B cell (primary cell): ENCODE measurements at regions of chr15 and their contacts with region 1.

Region 1: DNA sequence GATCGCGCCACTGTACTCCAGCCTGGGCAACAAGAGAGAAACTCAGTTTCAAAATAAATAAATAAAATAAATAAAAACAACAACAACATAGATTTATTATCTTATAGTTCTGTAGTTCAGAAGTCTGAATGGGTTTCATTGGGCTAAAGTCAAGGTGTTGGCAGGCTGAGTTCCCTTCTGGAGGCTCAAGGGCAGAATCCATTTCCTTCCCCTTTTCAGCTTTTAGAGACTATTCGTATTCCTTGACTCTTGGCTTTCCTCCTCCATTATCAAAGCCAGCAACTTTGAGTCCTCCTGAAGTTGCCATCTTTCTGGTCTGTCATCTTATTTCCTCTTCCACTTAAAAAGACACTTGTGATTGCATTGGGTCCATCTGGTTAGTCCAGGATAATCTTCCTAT is 12.1 kb downstream of the BLM start:
- DNase-seq: no peak
- ATAC-seq: no peak
- H3K4me3 ChIP-seq: no peak overlapping the region
- H3K4me3 Mint-ChIP-seq: no peak overlapping the region
- H3K27ac ChIP-seq: no peak overlapping the region
- H3K27ac Mint-ChIP-seq: no peak overlapping the region
- H3K4me1 ChIP-seq: peaks cover 9 to 11% of the 10 kb centered on the region in 2 donors
- H3K4me1 Mint-ChIP-seq: peaks cover 16% of the 10 kb centered on the region
- H3K27me3 ChIP-seq: no peaks in the 10 kb centered on the region
- H3K27me3 Mint-ChIP-seq: no peaks in the 10 kb centered on the region
- CTCF ChIP-seq: no peak

Region 2: DNA sequence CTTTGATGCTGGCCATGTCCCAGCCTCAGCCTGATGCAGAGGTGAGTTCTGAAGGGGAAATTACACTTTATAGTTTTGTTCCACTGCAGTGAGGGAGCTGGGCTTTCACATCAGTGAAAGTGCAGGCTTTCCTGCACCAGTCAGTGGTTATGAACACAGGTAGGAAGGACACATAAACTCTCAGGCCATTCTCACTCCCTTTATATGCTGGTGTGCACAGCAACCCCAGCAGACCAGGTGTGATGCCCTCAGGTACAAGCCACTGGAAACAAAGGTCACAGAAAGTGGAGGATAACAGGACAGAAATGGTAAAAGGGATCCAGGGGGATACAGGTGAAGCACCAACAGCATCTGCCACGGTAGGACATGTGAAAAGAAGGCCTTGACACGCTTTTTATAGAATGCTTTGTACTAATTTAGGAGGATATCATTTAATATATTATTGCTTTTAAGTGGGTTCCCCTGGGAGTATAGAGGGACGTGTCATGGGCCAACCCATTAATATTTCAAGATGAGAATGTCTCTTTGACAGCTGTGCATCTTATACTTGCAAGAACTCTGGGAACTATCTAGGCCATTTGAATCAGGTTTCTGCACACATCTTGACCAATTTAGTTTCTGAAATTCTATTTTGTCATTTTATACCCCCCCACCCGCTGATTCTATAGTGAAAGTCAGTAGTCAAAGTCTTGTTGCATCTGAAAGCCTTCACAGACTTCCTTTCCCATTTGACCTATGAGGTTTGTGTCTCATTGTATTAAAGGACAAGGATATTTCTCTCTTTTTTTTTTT is 37.1 kb before region 1 on chr15:
- CTCF ChIA-PET with region 1: no interaction called
- POLR2A ChIA-PET with region 1: no interaction called
- intact Hi-C with region 1: loop called (anchors 5 kb)
- DNase-seq: no peak
- ATAC-seq: no peak
- H3K4me3 ChIP-seq: no peak overlapping the region
- H3K4me3 Mint-ChIP-seq: no peak overlapping the region
- H3K27ac ChIP-seq: no peak overlapping the region
- H3K27ac Mint-ChIP-seq: peak overlapping the region; percentile 7
- H3K4me1 ChIP-seq: no peaks in the 10 kb centered on the region
- H3K4me1 Mint-ChIP-seq: no peaks in the 10 kb centered on the region
- H3K27me3 ChIP-seq: no peaks in the 10 kb centered on the region
- H3K27me3 Mint-ChIP-seq: no peaks in the 10 kb centered on the region
- CTCF ChIP-seq: no peak

Region 3: GRCh38 chr15:90742087-90742486 is 12.8 kb after region 1 on chr15:
- CTCF ChIA-PET with region 1: interaction called, 3 read pairs
- POLR2A ChIA-PET with region 1: no interaction called
- intact Hi-C with region 1: loop called (anchors 1 kb)
- DNase-seq: no peak
- ATAC-seq: no peak
- H3K4me3 ChIP-seq: no peak overlapping the region
- H3K4me3 Mint-ChIP-seq: no peak overlapping the region
- H3K27ac ChIP-seq: no peak overlapping the region
- H3K27ac Mint-ChIP-seq: no peak overlapping the region
- H3K4me1 ChIP-seq: no peaks in the 10 kb centered on the region
- H3K4me1 Mint-ChIP-seq: peaks cover 4% of the 10 kb centered on the region
- H3K27me3 ChIP-seq: no peaks in the 10 kb centered on the region
- H3K27me3 Mint-ChIP-seq: no peaks in the 10 kb centered on the region
- CTCF ChIP-seq: no peak